Endothelial cell of umbilical vein (primary cell): ENCODE measurements at regions of chr14 and their contacts with region 1.

Region 1: GRCh38 chr14:53881161-53881871 is 75.3 kb downstream of the BMP4 start:
- DNase-seq: peak; percentile 87
- H3K4me3 ChIP-seq: peak overlapping the region in 1 of 3 experiments; percentile 35
- H3K27ac ChIP-seq: peak overlapping the region; percentile 85
- H3K4me1 ChIP-seq: peaks cover 71% of the 10 kb centered on the region
- H3K27me3 ChIP-seq: no peaks in the 10 kb centered on the region
- CTCF ChIP-seq: no peak
- POLR2A ChIP-seq: peak; percentile 55

Region 2: GRCh38 chr14:53715193-53715721 is 166.1 kb before region 1 on chr14:
- CTCF ChIA-PET with region 1: no interaction called
- POLR2A ChIA-PET with region 1: no interaction called
- dilution Hi-C with region 1: no loop called
- intact Hi-C with region 1: loop called (anchors 1 kb)
- DNase-seq: peak; percentile 94
- H3K4me3 ChIP-seq: peak overlapping the region in 1 of 3 experiments; percentile 56
- H3K27ac ChIP-seq: peak overlapping the region; percentile 56
- H3K4me1 ChIP-seq: peaks cover 29% of the 10 kb centered on the region
- H3K27me3 ChIP-seq: no peaks in the 10 kb centered on the region
- CTCF ChIP-seq: no peak
- POLR2A ChIP-seq: peak; percentile 31

Region 3: DNA sequence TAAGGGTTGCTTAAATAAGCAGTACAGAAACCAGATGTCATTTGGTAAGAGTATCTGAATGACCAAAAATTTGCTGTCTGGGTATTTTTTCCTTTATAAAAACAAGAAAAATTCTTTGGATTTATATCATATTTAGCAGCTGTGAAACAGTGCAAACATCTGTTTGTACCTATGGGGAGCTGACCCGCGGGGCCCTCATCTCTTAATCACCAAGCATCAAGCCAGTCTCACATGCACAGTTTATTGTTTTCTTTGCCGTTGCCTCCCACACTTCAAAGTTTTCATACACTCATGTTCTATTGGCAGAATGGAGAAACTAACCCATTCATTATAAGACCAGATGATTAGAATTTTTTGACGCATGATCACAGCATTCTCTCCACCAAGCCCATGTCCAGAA is 66.9 kb before region 1 on chr14:
- CTCF ChIA-PET with region 1: no interaction called
- POLR2A ChIA-PET with region 1: no interaction called
- dilution Hi-C with region 1: no loop called
- intact Hi-C with region 1: no loop called
- DNase-seq: no peak
- H3K4me3 ChIP-seq: no peak overlapping the region
- H3K27ac ChIP-seq: no peak overlapping the region
- H3K4me1 ChIP-seq: no peaks in the 10 kb centered on the region
- H3K27me3 ChIP-seq: no peaks in the 10 kb centered on the region
- CTCF ChIP-seq: no peak
- POLR2A ChIP-seq: no peak

Region 4: DNA sequence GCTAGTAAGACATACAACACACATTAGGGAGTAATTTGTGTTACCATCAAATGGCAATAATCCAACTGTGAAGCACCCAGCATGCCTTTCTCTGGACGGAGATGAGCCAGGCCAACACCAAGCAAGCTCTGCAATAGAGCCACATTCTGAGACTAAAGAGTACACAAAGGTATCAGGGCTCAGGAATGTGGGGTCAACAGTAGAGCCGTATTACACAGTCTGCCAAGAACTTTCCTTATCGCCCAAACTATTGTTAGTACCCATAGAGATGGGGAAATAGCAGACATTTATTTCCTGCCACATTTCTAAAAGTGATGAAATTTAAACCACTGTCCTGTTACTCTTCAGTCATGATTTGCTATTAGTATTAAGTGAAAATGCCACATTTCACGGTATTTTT is 38.4 kb before region 1 on chr14:
- CTCF ChIA-PET with region 1: interaction called, 3 read pairs
- POLR2A ChIA-PET with region 1: no interaction called
- dilution Hi-C with region 1: no loop called
- intact Hi-C with region 1: loop called (anchors 2 kb)
- DNase-seq: peak; percentile 75
- H3K4me3 ChIP-seq: no peak overlapping the region
- H3K27ac ChIP-seq: peak overlapping the region; percentile 87
- H3K4me1 ChIP-seq: peaks cover 34% of the 10 kb centered on the region
- H3K27me3 ChIP-seq: no peaks in the 10 kb centered on the region
- CTCF ChIP-seq: no peak
- POLR2A ChIP-seq: peak; percentile 67

Region 5: GRCh38 chr14:53861781-53862180 is 19.5 kb before region 1 on chr14:
- CTCF ChIA-PET with region 1: no interaction called
- POLR2A ChIA-PET with region 1: no interaction called
- dilution Hi-C with region 1: no loop called
- intact Hi-C with region 1: no loop called
- DNase-seq: no peak
- H3K4me3 ChIP-seq: no peak overlapping the region
- H3K27ac ChIP-seq: no peak overlapping the region
- H3K4me1 ChIP-seq: peaks cover 3% of the 10 kb centered on the region
- H3K27me3 ChIP-seq: no peaks in the 10 kb centered on the region
- CTCF ChIP-seq: no peak
- POLR2A ChIP-seq: no peak